Colonic mucosa (tissue), 4 donors: ENCODE measurements at regions of chr3 and their contacts with region 1.

Region 1: GRCh38 chr3:81472600-81473362 is 288.7 kb downstream of the GBE1 start:
- DNase-seq: no peak
- H3K4me3 ChIP-seq: no peak overlapping the region
- H3K27ac ChIP-seq: no peak overlapping the region
- H3K4me1 ChIP-seq: no peaks in the 10 kb centered on the region
- H3K27me3 ChIP-seq: no peaks in the 10 kb centered on the region
- CTCF ChIP-seq: no peak

Region 2: GRCh38 chr3:81446806-81447205 is 26.0 kb before region 1 on chr3:
- intact Hi-C with region 1: loop called (anchors 2 kb)
- DNase-seq: no peak
- H3K4me3 ChIP-seq: no peak overlapping the region
- H3K27ac ChIP-seq: no peak overlapping the region
- H3K4me1 ChIP-seq: no peaks in the 10 kb centered on the region
- H3K27me3 ChIP-seq: no peaks in the 10 kb centered on the region
- CTCF ChIP-seq: no peak